ENCODE measurements at regions of chr14 and their contacts with region 1.

Region 1: DNA sequence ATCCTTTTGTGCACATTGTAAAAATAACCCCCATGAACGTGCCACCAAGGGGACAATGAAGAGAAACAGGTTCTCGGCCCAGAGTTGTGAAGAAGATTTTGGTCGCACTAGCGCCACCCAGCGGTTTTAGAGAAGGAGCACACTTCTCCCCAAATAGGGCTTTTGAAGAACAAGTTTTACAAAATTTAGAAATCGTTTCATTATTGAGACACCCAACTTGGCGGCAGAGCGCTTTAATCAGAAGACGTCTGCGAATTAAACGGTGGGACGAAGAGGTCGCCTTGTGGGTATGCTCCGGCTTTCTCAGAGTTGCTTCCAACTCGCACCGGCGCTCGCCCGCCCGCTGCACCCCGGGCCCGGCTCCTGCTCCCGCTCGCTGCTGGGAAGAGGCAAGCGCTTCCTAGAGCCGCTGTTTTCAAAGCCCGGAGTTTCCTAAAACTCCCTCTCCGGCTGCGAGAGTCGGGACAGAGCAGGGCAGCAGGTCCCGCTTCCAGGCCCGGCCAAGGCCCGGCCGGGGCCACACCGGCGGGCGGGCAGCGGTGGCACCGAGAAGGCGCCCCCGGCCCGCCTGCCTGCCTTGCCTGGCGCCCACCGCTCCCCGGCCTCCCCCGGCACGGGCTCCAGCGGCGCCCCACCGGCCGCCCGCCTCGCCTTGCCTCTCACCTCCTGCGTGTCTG is 673 bp downstream of the FOXA1 start:
- DNase-seq: no peak
- H3K4me3 Mint-ChIP-seq: peak overlapping the region; percentile 74
- H3K27ac Mint-ChIP-seq: peak overlapping the region; percentile 73
- H3K4me1 Mint-ChIP-seq: peaks cover 13% of the 10 kb centered on the region
- H3K27me3 Mint-ChIP-seq: peaks cover 72% of the 10 kb centered on the region

Region 2: DNA sequence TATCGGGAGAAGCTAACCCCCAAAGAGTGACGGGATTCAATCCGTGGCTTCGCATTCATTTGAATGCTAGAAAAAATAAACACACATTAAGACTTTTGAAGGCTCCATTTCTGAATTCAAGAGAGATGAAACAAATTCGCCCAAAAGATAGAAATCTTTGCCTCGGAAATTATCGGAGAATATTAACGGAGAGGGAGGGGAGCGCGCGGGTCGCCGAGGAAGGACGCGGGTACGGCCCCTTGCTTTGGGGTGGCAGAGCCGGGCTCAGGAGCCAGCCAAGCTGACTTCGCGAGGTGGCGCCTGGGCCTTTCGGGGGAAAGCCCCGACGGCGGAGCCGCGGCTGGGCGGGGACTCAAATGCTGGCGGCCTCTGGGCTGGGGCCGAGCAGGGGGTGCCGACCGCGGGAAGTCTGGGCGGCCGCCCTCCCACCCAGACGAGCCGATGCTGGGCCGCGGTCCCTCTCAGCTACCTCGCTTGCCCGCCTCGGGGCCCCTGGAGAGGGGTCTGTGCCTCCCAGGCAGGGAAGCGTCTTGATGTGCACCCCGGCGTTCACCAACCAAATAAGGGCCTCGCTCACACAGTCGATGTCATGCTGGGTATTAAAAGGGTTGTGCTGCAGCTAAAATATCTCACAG is 1089.1 kb before region 1 on chr14:
- intact Hi-C with region 1: loop called (anchors 5 kb)
- DNase-seq: no peak
- H3K4me3 Mint-ChIP-seq: no peak overlapping the region
- H3K27ac Mint-ChIP-seq: no peak overlapping the region
- H3K4me1 Mint-ChIP-seq: no peaks in the 10 kb centered on the region
- H3K27me3 Mint-ChIP-seq: peaks cover 75% of the 10 kb centered on the region

Region 3: GRCh38 chr14:36655963-36656686 is 938.3 kb before region 1 on chr14:
- intact Hi-C with region 1: loop called (anchors 2 kb)
- DNase-seq: no peak
- H3K4me3 Mint-ChIP-seq: no peak overlapping the region
- H3K27ac Mint-ChIP-seq: no peak overlapping the region
- H3K4me1 Mint-ChIP-seq: peaks cover 5% of the 10 kb centered on the region
- H3K27me3 Mint-ChIP-seq: peaks cover 77% of the 10 kb centered on the region

Region 4: DNA sequence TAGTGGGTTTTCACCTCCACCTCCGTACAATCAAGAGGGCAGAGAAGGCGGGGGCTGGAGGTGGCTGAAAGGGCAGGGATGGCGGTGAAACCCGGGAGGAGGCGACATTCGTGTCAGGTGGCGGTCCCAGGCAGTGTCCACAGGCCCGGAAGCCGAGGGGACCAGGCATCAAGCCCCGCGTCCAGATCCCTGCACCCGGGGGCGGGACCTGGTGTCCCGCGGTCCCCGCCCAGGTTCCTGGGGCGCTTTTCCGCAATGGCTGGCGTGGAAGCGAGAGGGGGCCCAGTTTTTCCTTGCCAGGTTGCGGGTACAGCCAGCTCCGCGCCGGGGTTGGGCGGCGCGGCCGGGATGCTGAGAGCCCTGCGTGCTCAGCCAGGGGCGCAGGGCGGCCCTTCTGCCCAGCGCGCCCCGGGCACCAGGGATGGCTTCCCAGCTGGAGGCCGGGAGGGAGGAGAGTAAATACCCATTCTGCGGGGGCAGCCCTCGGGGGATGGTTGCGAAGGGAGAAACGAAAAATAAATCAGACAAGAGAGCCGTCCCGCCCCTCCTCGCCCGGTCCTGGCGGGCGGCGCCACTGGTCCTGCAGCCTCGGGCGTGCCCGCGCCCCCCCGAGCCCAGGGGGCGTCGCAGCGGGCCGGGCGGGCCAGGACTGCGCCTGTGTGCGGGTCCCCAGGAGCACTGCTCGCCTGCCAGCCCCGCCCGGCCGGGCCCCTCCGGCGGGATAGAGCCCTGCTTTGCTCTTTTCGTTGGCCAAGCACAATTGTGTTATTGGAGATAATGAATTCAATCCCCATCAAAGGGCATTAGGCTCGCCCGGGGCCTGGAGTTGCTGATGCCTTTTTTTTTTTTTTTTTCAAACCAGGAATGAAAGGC is 10.8 kb before region 1 on chr14:
- intact Hi-C with region 1: loop called (anchors 2 kb)
- DNase-seq: no peak
- H3K4me3 Mint-ChIP-seq: no peak overlapping the region
- H3K27ac Mint-ChIP-seq: no peak overlapping the region
- H3K4me1 Mint-ChIP-seq: no peaks in the 10 kb centered on the region
- H3K27me3 Mint-ChIP-seq: peaks cover 29% of the 10 kb centered on the region

Region 5: GRCh38 chr14:38255673-38256532 is 661.5 kb after region 1 on chr14 and contains the start of gene CLEC14A:
- intact Hi-C with region 1: loop called (anchors 5 kb)
- DNase-seq: no peak
- H3K4me3 Mint-ChIP-seq: peak within 1 kb of the TSS; percentile 56
- H3K27ac Mint-ChIP-seq: no peak within 1 kb of the TSS
- H3K4me1 Mint-ChIP-seq: peaks cover 10% of the 10 kb centered on the region
- H3K27me3 Mint-ChIP-seq: peaks cover 33% of the 10 kb centered on the region
- total RNA-seq, gene CLEC14A: not detected in 2 replicates

Measured in activated T-helper 1 cell treated with anti-CD3 and anti-CD28 coated beads, Interleukin-12 subunit alpha, Interleukin-12 subunit beta, Interleukin-2, Interleukin-4 antibody, amounts not matched to agents 30 ng/mL and 10 ng/mL and 1 ng/mL, durations not matched to agents 14 hours and 24 hours and 36 hours (primary cell).